ENCODE measurements at regions of chr17 and their contacts with region 1.

Region 1: DNA sequence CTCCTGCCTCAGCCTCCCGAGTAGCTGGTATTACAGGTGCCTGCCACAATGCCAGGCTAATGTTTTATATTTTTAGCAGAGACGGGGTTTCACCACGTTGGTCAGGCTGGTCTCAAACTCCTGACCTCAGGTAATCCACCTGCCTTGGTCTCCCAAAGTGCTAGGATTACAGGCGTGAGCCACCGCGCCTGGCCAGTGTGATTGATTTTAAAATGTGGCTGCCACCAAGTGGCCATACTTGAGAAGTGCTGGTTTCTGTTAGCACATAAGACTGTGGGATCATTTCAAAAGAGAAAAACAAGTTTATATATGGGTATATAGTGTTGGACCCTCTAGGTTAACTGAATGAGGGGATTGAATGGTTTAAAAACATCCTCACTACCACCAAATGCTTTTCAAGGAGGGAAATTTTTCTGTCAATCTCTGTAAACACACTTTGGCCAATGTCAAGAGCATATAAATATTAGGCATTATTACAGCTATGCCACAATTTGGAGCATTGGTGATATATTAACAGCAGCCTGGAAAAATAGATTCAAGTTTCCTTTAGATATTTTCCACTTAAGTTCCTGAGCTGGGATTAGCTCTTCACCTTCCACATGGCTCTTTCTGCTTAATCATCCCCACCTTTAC is 13.5 kb upstream of the DHRS13 start:
- DNase-seq: peak in 1 of 2 donors; percentile 86
- H3K4me3 ChIP-seq: no peak overlapping the region
- CTCF ChIP-seq: no peak
- POLR2A ChIP-seq: no peak

Region 2: DNA sequence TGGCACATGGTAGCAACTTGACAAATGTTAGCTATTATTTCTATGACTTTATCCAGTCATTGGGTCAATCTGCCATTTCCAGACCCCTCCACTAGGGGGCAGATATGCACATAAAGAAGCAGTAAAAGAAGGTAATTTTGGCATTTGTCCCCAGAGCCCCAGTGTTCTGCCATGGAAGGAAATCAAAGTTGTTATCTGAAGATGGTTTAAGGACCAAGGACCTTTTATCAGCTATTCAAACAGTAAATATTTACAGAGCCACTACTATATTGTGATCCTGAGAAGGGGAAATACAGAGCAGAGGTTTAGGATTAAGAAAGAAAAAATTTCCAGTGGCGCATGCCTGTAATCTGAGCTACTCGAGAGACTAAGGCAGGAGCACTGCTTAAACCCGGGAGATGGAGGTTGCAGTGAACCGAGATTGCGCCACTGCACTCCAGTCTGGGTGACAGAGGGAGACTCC is 152.6 kb before region 1 on chr17:
- intact Hi-C with region 1: loop called (anchors 5 kb)
- DNase-seq: peak; percentile 79 to 96
- H3K4me3 ChIP-seq: no peak overlapping the region
- CTCF ChIP-seq: peak in 2 of 3 donors; percentile 67 to 73
- POLR2A ChIP-seq: no peak

Region 3: GRCh38 chr17:28812091-28812747 is 104.2 kb before region 1 on chr17:
- intact Hi-C with region 1: no loop called
- DNase-seq: peak; percentile 95 to 99
- H3K4me3 ChIP-seq: peak overlapping the region; percentile 87
- CTCF ChIP-seq: no peak
- POLR2A ChIP-seq: no peak

Region 4: GRCh38 chr17:29078183-29079045 is 162.0 kb after region 1 on chr17:
- intact Hi-C with region 1: no loop called
- DNase-seq: no peak
- H3K4me3 ChIP-seq: no peak overlapping the region
- CTCF ChIP-seq: no peak
- POLR2A ChIP-seq: no peak